ENCODE measurements at regions of chr1 and their contacts with region 1.

Region 1: GRCh38 chr1:70410604-70411359 is at the start of gene CTH:
- DNase-seq: peak; percentile 98
- H3K4me3 ChIP-seq: peak within 1 kb of the TSS; percentile 83
- H3K27ac ChIP-seq: peak within 1 kb of the TSS; percentile 81
- H3K4me1 ChIP-seq: peaks cover 22% of the 10 kb centered on the region
- H3K27me3 ChIP-seq: no peaks in the 10 kb centered on the region
- CTCF ChIP-seq: no peak
- total RNA-seq, gene CTH: 21.7 and 33.9 TPM in 2 replicates

Region 2: DNA sequence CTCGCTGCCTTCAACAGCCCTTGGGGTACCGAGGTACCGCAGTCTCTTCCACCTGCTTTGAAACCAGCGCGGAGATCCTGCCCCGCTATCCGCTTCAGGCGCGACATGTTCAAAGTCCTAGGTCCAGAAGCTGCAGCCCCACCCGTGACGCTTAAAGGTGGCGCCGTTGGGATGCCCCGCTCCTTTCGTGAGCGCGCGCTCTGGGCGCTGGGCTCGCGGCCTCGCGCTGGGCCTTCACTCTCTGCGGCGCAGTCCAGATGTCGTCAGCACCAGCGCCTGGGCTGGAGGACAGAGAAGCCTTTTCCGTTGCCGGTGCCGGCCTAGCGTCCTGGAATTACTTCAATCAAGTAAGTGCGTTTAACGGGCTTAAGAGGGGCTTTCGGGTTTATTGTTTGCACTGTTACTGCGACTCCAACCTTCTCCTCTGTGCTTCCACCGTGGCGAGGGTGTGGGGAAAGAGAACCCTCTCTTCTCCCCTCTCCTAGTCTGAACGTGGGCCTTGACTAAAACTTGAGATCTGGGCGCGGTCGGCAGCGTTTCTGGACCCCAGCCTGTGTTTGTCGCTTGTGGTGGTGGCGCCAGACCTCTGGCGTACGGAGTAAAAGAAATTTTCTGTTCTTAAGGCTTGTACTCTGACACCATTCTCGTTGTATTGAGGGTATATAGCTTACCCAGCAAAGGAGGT is 205.2 kb before region 1 on chr1 and contains the start of gene LRRC40:
- CTCF ChIA-PET with region 1: no interaction called
- POLR2A ChIA-PET with region 1: no interaction called
- intact Hi-C with region 1: loop called (anchors 5 kb)
- DNase-seq: peak; percentile 90 to 96
- H3K4me3 ChIP-seq: peak within 1 kb of the TSS; percentile 85
- H3K27ac ChIP-seq: peak within 1 kb of the TSS; percentile 70
- H3K4me1 ChIP-seq: peaks cover 17% of the 10 kb centered on the region
- H3K27me3 ChIP-seq: no peaks in the 10 kb centered on the region
- CTCF ChIP-seq: no peak
- total RNA-seq, gene LRRC40: 10.6 and 12.0 TPM in 2 replicates

Region 3: GRCh38 chr1:70256664-70257063 is 154.1 kb before region 1 on chr1:
- CTCF ChIA-PET with region 1: no interaction called
- POLR2A ChIA-PET with region 1: interaction called, 11 read pairs
- intact Hi-C with region 1: no loop called
- DNase-seq: no peak
- H3K4me3 ChIP-seq: no peak overlapping the region
- H3K27ac ChIP-seq: no peak overlapping the region
- H3K4me1 ChIP-seq: no peaks in the 10 kb centered on the region
- H3K27me3 ChIP-seq: no peaks in the 10 kb centered on the region
- CTCF ChIP-seq: no peak

Region 4: GRCh38 chr1:70354332-70355110 is 56.3 kb before region 1 on chr1 and contains the start of gene ANKRD13C:
- CTCF ChIA-PET with region 1: no interaction called
- POLR2A ChIA-PET with region 1: interaction called, 33 read pairs
- intact Hi-C with region 1: loop called (anchors 1 kb)
- DNase-seq: peak; percentile 89 to 93
- H3K4me3 ChIP-seq: peak within 1 kb of the TSS; percentile 72
- H3K27ac ChIP-seq: peak within 1 kb of the TSS; percentile 76
- H3K4me1 ChIP-seq: peaks cover 18% of the 10 kb centered on the region
- H3K27me3 ChIP-seq: no peaks in the 10 kb centered on the region
- CTCF ChIP-seq: no peak
- total RNA-seq, gene ANKRD13C: 19.4 and 24.3 TPM in 2 replicates

Region 5: GRCh38 chr1:70465911-70466310 is 55.1 kb after region 1 on chr1:
- CTCF ChIA-PET with region 1: no interaction called
- POLR2A ChIA-PET with region 1: interaction called, 10 read pairs
- intact Hi-C with region 1: no loop called
- DNase-seq: no peak
- H3K4me3 ChIP-seq: no peak overlapping the region
- H3K27ac ChIP-seq: no peak overlapping the region
- H3K4me1 ChIP-seq: no peaks in the 10 kb centered on the region
- H3K27me3 ChIP-seq: no peaks in the 10 kb centered on the region
- CTCF ChIP-seq: no peak

Measured in PC-9 (cell line).